HEK293 (cell line): ENCODE measurements at regions of chr14 and their contacts with region 1.

Region 1: GRCh38 chr14:21103710-21104447 is 3.0 kb downstream of the TMEM253 start:
- H3K4me3 ChIP-seq: peak overlapping the region; percentile 49
- H3K27ac ChIP-seq: peak overlapping the region; percentile 99
- H3K4me1 ChIP-seq: peaks cover 25% of the 10 kb centered on the region
- CTCF ChIP-seq: peak; percentile 95

Region 2: DNA sequence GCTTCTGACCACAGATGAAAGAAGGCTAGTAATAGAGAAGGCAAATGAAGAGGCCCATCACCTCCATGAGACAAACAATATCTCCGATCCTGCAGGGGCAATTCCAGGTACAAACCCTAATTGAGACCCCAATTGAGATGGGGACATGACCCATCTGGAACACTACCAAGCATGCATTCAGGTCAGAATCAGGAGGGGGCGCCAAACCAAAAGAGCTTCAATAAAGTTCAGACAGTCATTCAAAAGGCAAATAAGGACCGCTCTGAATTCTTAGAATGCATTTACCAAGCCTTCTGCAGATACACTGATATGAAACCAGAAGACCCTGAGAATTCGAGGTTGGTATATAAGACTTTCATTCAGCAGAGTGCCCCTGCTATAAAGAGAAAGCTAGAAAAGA is 345.9 kb before region 1 on chr14:
- CTCF ChIA-PET with region 1: no interaction called
- POLR2A ChIA-PET with region 1: no interaction called
- H3K4me3 ChIP-seq: no peak overlapping the region
- H3K27ac ChIP-seq: no peak overlapping the region
- H3K4me1 ChIP-seq: no peaks in the 10 kb centered on the region
- CTCF ChIP-seq: no peak

Region 3: GRCh38 chr14:21003788-21004346 is 100.0 kb before region 1 on chr14:
- CTCF ChIA-PET with region 1: interaction called, 14 read pairs
- POLR2A ChIA-PET with region 1: no interaction called
- H3K4me3 ChIP-seq: no peak overlapping the region
- H3K27ac ChIP-seq: no peak overlapping the region
- H3K4me1 ChIP-seq: no peaks in the 10 kb centered on the region
- CTCF ChIP-seq: no peak

Region 4: GRCh38 chr14:21039585-21040369 is 64.1 kb before region 1 on chr14:
- CTCF ChIA-PET with region 1: interaction called, 12 read pairs
- POLR2A ChIA-PET with region 1: no interaction called
- H3K4me3 ChIP-seq: no peak overlapping the region
- H3K27ac ChIP-seq: no peak overlapping the region
- H3K4me1 ChIP-seq: no peaks in the 10 kb centered on the region
- CTCF ChIP-seq: peak; percentile 67

Region 5: DNA sequence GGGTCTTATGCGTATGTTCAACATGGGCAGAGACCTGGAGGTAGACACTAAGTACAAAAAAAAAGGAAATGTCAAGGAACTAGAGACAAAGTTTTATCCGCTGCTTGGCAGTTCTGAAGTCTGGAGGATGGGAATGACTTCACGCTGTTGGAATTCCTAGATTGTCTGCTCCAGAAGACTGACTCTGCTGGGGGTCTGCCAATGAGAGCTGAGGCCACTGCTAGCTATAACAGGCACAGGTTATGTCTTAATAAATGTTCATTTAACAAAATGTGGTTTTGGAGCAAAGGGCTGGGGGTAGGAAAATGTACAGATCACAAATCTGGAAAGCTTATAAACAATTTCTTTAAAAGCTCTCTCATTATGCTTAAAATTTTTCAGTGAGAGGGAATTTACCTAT is 40.4 kb before region 1 on chr14:
- CTCF ChIA-PET with region 1: interaction called, 131 read pairs
- POLR2A ChIA-PET with region 1: interaction called, 8 read pairs
- H3K4me3 ChIP-seq: no peak overlapping the region
- H3K27ac ChIP-seq: no peak overlapping the region
- H3K4me1 ChIP-seq: no peaks in the 10 kb centered on the region; the same call in 1 of the 2 replicates
- CTCF ChIP-seq: no peak

Region 6: GRCh38 chr14:21071225-21072030 is 32.5 kb before region 1 on chr14:
- CTCF ChIA-PET with region 1: interaction called, 131 read pairs
- POLR2A ChIA-PET with region 1: interaction called, 29 read pairs
- H3K4me3 ChIP-seq: peak overlapping the region; percentile 79
- H3K27ac ChIP-seq: peak overlapping the region; percentile 86
- H3K4me1 ChIP-seq: peaks cover 16% of the 10 kb centered on the region
- CTCF ChIP-seq: no peak

Region 7: GRCh38 chr14:21136024-21136423 is 32.1 kb after region 1 on chr14:
- CTCF ChIA-PET with region 1: interaction called, 17 read pairs
- POLR2A ChIA-PET with region 1: no interaction called
- H3K4me3 ChIP-seq: no peak overlapping the region
- H3K27ac ChIP-seq: no peak overlapping the region
- H3K4me1 ChIP-seq: no peaks in the 10 kb centered on the region
- CTCF ChIP-seq: no peak